ENCODE measurements at regions of chr18 and their contacts with region 1.

Region 1: DNA sequence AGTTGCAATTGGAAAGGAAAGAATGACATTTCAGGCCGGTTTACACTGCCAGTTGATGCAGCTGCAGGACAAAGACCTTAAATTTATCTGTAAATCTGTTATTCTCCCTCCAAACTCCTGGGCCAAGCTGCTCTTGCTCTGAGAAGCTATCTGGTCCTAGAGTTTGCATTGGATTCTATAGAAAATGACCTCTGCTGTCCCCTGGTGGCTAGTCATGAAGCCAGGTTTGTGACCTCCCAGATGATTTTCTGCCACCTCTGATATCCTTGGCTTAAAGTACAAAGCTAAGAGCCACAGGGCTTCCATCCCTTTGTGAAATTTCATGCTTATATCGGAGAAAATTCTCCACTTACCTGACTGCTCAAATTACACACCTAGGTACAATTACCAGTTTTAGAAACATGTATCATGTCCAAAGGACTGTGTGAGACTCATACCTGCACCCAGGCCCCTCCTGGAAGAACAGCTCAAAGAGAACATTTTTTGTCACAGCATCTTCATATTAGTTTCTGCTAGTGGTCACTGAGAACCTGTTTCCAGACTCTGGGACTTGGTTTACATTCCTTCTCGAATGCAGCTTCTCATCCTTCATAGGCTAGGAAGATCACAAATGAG is 28.9 kb upstream of the IER3IP1 start:
- DNase-seq: peak; percentile 11 to 46 (median 17)
- H3K4me3 ChIP-seq: no peak overlapping the region
- H3K4me3 Mint-ChIP-seq: no peak overlapping the region
- H3K27ac ChIP-seq: no peak overlapping the region
- H3K27ac Mint-ChIP-seq: no peak overlapping the region
- H3K4me1 ChIP-seq: no peaks in the 10 kb centered on the region
- H3K4me1 Mint-ChIP-seq: no peaks in the 10 kb centered on the region
- H3K27me3 ChIP-seq: no peaks in the 10 kb centered on the region
- H3K27me3 Mint-ChIP-seq: peaks cover 6 to 27% of the 10 kb centered on the region in 2 donors

Region 2: GRCh38 chr18:47100214-47100831 is 104.7 kb before region 1 on chr18:
- CTCF ChIA-PET with region 1: interaction called, 59 read pairs
- POLR2A ChIA-PET with region 1: no interaction called
- DNase-seq: peak; percentile 31 to 68 (median 38)
- H3K4me3 ChIP-seq: no peak overlapping the region
- H3K4me3 Mint-ChIP-seq: no peak overlapping the region
- H3K27ac ChIP-seq: no peak overlapping the region
- H3K27ac Mint-ChIP-seq: no peak overlapping the region
- H3K4me1 ChIP-seq: no peaks in the 10 kb centered on the region
- H3K4me1 Mint-ChIP-seq: no peaks in the 10 kb centered on the region
- H3K27me3 ChIP-seq: no peaks in the 10 kb centered on the region
- H3K27me3 Mint-ChIP-seq: peaks cover 0 to 2% of the 10 kb centered on the region in 2 donors

Region 3: GRCh38 chr18:47226660-47227059 is 21.6 kb after region 1 on chr18:
- CTCF ChIA-PET with region 1: no interaction called
- POLR2A ChIA-PET with region 1: no interaction called
- DNase-seq: no peak
- H3K4me3 ChIP-seq: no peak overlapping the region
- H3K4me3 Mint-ChIP-seq: no peak overlapping the region
- H3K27ac ChIP-seq: no peak overlapping the region
- H3K27ac Mint-ChIP-seq: peak overlapping the region in 1 of 8 donors; percentile 0
- H3K4me1 ChIP-seq: no peaks in the 10 kb centered on the region
- H3K4me1 Mint-ChIP-seq: no peaks in the 10 kb centered on the region
- H3K27me3 ChIP-seq: peaks cover 3% of the 10 kb centered on the region
- H3K27me3 Mint-ChIP-seq: peaks cover 24 to 49% of the 10 kb centered on the region in 2 donors

Measured in CD8-positive, alpha-beta memory T cell (primary cell).